HAP-1 (cell line): ENCODE measurements at regions of chr13 and their contacts with region 1.

Region 1: GRCh38 chr13:35157143-35157755 is 215.2 kb downstream of the NBEA start:
- DNase-seq: peak; percentile 62 to 71
- H3K4me3 ChIP-seq: no peak overlapping the region
- H3K4me1 ChIP-seq: peaks cover 8% of the 10 kb centered on the region
- H3K27me3 ChIP-seq: no peaks in the 10 kb centered on the region

Region 2: GRCh38 chr13:33931397-33932311 is 1225.6 kb before region 1 on chr13:
- in situ Hi-C with region 1: loop called (anchors 25 kb)
- DNase-seq: peak; percentile 62
- H3K4me3 ChIP-seq: no peak overlapping the region
- H3K4me1 ChIP-seq: peaks cover 3% of the 10 kb centered on the region; the same call in 1 of the 2 replicates
- H3K27me3 ChIP-seq: no peaks in the 10 kb centered on the region

Region 3: DNA sequence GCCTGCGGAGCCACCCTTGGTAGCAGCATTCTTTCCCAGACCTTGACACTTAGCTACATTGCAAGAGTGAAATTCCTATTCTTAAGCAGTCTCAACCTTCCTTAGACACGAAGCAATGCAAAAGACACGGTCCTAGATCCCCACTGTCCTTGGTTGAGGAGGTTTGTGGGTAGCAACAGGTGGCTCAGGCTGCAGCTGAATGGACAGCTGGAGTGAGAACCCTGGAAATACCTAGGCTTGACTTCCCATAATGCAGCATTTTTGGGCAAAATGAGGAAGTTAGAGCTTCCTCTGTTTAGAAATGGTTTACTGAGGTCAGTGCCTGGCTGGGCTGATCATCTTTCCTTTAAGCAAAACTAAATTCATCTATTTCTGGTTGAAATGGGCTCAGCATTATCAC is 1042.7 kb before region 1 on chr13:
- in situ Hi-C with region 1: no loop called
- DNase-seq: no peak
- H3K4me3 ChIP-seq: no peak overlapping the region
- H3K4me1 ChIP-seq: peaks cover 5% of the 10 kb centered on the region
- H3K27me3 ChIP-seq: no peaks in the 10 kb centered on the region

Region 4: DNA sequence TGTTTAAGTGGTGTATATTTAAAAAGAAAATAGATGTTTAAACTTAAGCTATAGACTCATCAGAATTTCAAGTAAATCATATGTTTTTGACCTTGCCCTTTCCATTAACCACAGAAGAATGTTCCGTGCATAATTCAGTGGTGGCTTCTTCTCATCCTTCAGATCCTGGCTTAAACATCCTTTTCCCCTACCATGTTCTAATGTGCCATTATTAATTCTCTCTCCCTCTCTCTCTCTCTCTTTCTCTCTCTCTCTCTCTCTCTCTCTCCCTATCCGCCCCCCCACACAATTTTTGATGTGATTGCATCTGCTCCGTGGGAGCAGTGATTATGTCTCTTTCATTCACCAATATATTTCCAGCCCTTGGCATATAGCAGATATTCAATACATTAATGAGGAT is 857.5 kb after region 1 on chr13:
- in situ Hi-C with region 1: no loop called
- DNase-seq: no peak
- H3K4me3 ChIP-seq: no peak overlapping the region
- H3K4me1 ChIP-seq: no peaks in the 10 kb centered on the region
- H3K27me3 ChIP-seq: no peaks in the 10 kb centered on the region